CD4-positive, alpha-beta T cell (primary cell): ENCODE measurements at regions of chr10 and their contacts with region 1.

Region 1: GRCh38 chr10:102917962-102918816 is at the start of gene CNNM2:
- DNase-seq: peak; percentile 98 to 100 (median 100)
- ATAC-seq: peak; percentile 88
- H3K4me3 ChIP-seq: peak within 1 kb of the TSS; percentile 92
- H3K4me3 Mint-ChIP-seq: peak within 1 kb of the TSS; percentile 98
- H3K27ac ChIP-seq: peak within 1 kb of the TSS; percentile 91
- H3K27ac Mint-ChIP-seq: peak within 1 kb of the TSS; percentile 90
- H3K4me1 ChIP-seq: peaks cover 34% of the 10 kb centered on the region
- H3K4me1 Mint-ChIP-seq: peaks cover 59% of the 10 kb centered on the region
- H3K27me3 ChIP-seq: peaks cover 3 to 8% of the 10 kb centered on the region in 2 experiments
- H3K27me3 Mint-ChIP-seq: peaks cover 22% of the 10 kb centered on the region
- CTCF ChIP-seq: no peak
- total RNA-seq, gene CNNM2: 8.4 to 8.9 TPM

Region 2: DNA sequence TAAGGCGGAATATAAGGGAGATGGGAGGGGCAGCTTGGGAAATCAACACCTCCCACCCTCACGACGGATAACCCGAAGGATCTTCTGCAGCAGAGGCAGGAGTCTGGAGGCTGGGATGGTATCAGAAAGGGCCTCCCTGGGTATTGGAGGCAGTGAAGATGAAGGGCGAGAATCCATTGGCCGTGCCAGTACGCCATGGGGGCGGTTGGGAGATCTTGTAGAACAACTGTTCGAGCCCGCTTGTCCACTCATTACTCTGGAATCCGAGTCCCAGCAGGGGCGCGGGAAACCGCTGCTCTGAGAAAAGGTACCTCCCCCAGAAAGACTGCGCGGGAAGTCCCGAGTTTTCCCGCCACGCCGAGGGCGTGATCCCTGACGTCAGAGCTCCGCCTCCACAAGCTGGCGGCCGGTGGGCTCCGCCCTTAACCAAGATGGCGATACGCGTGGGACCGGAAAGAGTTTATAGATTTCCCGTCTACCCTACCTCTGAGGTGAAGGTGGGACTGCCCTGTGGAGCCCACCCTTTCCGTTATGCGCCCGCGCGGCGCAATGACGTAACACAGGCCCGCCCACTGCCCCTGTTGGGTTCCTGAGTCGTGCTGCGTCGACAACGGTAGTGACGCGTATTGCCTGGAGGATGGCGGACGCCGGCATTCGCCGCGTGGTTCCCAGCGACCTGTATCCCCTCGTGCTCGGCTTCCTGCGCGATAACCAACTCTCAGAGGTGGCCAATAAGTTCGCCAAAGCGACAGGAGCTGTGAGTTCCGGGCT is 766.2 kb before region 1 on chr10 and contains the start of gene NOLC1:
- CTCF ChIA-PET with region 1: no interaction called
- POLR2A ChIA-PET with region 1: no interaction called
- intact Hi-C with region 1: loop called in 1 of 2 experiments (anchors 5 kb)
- DNase-seq: peak; percentile 98 to 100 (median 100)
- ATAC-seq: peak; percentile 93
- H3K4me3 ChIP-seq: peak within 1 kb of the TSS; percentile 80
- H3K4me3 Mint-ChIP-seq: peak within 1 kb of the TSS; percentile 91
- H3K27ac ChIP-seq: peak within 1 kb of the TSS; percentile 89 to 93
- H3K27ac Mint-ChIP-seq: peak within 1 kb of the TSS; percentile 90
- H3K4me1 ChIP-seq: peaks cover 42% of the 10 kb centered on the region
- H3K4me1 Mint-ChIP-seq: peaks cover 50% of the 10 kb centered on the region
- H3K27me3 ChIP-seq: no peaks in the 10 kb centered on the region
- H3K27me3 Mint-ChIP-seq: no peaks in the 10 kb centered on the region
- CTCF ChIP-seq: no peak
- total RNA-seq, gene NOLC1: 34.2 to 36.1 TPM

Region 3: DNA sequence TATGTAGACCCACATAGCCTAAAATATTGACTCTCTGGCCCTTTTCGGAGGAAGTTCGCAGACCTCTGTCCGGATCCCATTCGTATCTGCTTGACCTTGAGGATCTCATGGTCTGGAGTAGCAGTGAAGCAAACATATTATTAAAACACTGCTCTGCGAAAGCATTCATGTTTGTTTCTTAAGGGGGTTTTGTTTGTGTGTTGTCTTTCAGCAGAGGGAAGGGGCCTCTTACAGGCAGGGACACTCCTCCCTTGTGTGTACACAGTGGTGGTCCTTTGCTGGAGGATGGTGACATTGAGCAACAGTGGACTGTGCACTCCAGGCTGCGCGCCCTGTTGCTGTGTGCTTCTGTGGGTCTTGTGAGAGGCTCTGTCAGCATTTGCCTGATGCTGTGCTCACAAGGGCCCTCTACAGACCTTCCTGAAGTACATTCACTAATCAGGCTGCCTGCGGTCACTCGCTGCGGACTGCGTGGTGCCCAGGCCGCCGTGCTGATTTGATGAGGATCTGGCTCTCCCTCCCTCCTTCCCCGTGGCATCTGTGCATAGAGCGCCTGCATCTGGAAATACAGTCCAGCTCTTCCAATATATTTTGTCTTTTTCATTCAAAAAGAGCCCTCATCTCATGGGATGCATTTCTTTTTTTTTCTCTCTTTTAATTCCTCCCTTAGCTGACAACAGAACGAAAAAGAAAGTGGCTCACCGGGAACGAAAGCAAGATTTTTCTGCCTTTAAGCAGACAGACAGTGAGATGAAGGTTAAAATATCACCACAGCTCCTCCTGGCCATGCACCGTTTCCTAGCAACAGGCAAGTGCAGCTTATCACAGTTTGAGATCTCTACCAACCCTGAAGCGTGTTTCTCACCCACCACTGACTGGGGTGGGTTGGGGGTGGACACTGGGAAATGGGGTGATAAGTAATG is 135.7 kb after region 1 on chr10:
- CTCF ChIA-PET with region 1: no interaction called
- POLR2A ChIA-PET with region 1: interaction called, 5 read pairs
- intact Hi-C with region 1: loop called in 1 of 2 experiments (anchors 5 kb)
- DNase-seq: peak; percentile 10 to 82 (median 34)
- ATAC-seq: peak; percentile 95
- H3K4me3 ChIP-seq: peak overlapping the region; percentile 52
- H3K4me3 Mint-ChIP-seq: peak overlapping the region; percentile 78
- H3K27ac ChIP-seq: peak overlapping the region; percentile 29 to 74
- H3K27ac Mint-ChIP-seq: peak overlapping the region; percentile 75
- H3K4me1 ChIP-seq: peaks cover 23% of the 10 kb centered on the region
- H3K4me1 Mint-ChIP-seq: peaks cover 15% of the 10 kb centered on the region
- H3K27me3 ChIP-seq: no peaks in the 10 kb centered on the region
- H3K27me3 Mint-ChIP-seq: no peaks in the 10 kb centered on the region
- CTCF ChIP-seq: no peak

Region 4: DNA sequence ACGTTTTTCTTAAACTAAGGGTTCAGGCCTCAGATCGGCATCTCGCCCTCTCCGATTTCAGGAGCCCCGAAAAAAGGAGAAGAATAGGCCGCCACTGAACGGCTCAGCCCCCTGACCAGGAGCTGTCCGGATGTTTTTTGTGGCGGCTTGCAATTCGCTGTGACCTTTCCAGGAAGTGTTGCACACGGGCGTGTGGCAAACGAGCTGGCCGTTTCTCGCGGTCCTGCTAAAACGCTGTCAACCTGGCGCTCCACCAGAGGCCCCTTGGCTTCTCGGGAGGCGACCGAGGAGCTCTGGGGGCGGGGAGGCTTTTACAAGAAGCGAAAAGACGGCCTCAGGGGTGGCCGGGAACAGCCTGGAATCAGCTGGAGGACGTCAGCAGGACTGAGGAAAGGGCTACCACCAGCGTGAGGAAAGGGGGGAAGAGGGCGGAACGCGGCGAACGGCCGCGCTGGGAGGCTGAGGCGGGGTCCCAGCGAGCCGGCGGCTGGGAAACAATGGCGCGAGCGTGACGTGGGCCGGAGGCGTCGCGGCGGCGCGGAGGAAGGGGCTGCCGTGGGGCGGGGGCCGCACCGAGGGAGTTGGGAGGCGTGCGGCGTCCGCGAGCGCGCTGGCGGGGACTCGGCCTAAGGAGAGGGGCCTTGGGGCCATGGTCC is 274.4 kb after region 1 on chr10:
- CTCF ChIA-PET with region 1: interaction called, 11 read pairs
- POLR2A ChIA-PET with region 1: interaction called, 17 read pairs
- intact Hi-C with region 1: loop called in 1 of 2 experiments (anchors 5 kb)
- DNase-seq: peak; percentile 24 to 78 (median 40)
- ATAC-seq: peak; percentile 68
- H3K4me3 ChIP-seq: peak overlapping the region; percentile 79
- H3K4me3 Mint-ChIP-seq: peak overlapping the region; percentile 99
- H3K27ac ChIP-seq: peak overlapping the region; percentile 75 to 78
- H3K27ac Mint-ChIP-seq: peak overlapping the region; percentile 86
- H3K4me1 ChIP-seq: peaks cover 20% of the 10 kb centered on the region
- H3K4me1 Mint-ChIP-seq: peaks cover 49% of the 10 kb centered on the region
- H3K27me3 ChIP-seq: no peaks in the 10 kb centered on the region
- H3K27me3 Mint-ChIP-seq: no peaks in the 10 kb centered on the region
- CTCF ChIP-seq: no peak

Region 5: GRCh38 chr10:103333925-103334520 is 415.8 kb after region 1 on chr10:
- CTCF ChIA-PET with region 1: interaction called, 5 read pairs
- POLR2A ChIA-PET with region 1: no interaction called
- intact Hi-C with region 1: loop called (anchors 2 to 5 kb)
- DNase-seq: peak in 3 of 14 experiments; percentile 35 to 44 (median 36)
- ATAC-seq: no peak
- H3K4me3 ChIP-seq: no peak overlapping the region
- H3K4me3 Mint-ChIP-seq: no peak overlapping the region
- H3K27ac ChIP-seq: no peak overlapping the region
- H3K27ac Mint-ChIP-seq: no peak overlapping the region
- H3K4me1 ChIP-seq: no peaks in the 10 kb centered on the region
- H3K4me1 Mint-ChIP-seq: no peaks in the 10 kb centered on the region
- H3K27me3 ChIP-seq: no peaks in the 10 kb centered on the region
- H3K27me3 Mint-ChIP-seq: no peaks in the 10 kb centered on the region
- CTCF ChIP-seq: peak; percentile 76

Region 6: DNA sequence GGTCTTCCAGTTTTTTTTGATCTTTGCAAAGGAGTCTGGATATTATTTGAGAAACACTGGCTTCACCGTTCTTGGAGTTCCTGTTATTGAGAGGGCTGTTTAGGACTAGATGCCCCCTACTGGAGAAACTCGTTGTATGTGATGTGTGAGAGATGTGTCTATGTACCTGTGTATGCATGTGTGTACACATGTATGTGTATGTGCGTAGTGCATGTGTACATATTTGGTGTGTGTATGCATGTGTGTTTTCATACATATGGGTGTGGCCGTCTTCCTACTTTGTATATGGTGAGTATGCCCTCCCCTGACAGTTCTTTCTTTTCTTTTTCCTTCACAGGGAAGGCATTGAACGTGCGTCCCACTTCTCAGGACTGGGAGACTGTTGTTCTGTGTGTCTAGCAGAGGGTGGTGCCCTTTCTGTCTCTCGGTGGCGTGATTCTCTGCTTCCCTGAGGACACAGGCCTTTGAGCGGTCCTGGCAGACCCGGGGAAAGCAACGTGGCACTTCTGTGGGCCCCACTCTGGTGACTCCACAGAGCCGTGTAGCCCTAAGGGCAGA is 563.9 kb after region 1 on chr10:
- CTCF ChIA-PET with region 1: no interaction called
- POLR2A ChIA-PET with region 1: no interaction called
- intact Hi-C with region 1: loop called (anchors 5 kb)
- DNase-seq: peak in 5 of 14 experiments; percentile 15 to 84 (median 81)
- ATAC-seq: peak; percentile 78
- H3K4me3 ChIP-seq: no peak overlapping the region
- H3K4me3 Mint-ChIP-seq: no peak overlapping the region
- H3K27ac ChIP-seq: no peak overlapping the region
- H3K27ac Mint-ChIP-seq: no peak overlapping the region
- H3K4me1 ChIP-seq: peaks cover 7% of the 10 kb centered on the region
- H3K4me1 Mint-ChIP-seq: peaks cover 5% of the 10 kb centered on the region
- H3K27me3 ChIP-seq: no peaks in the 10 kb centered on the region
- H3K27me3 Mint-ChIP-seq: no peaks in the 10 kb centered on the region
- CTCF ChIP-seq: peak; percentile 90